ENCODE measurements at regions of chr3 and their contacts with region 1.

Region 1: GRCh38 chr3:132722164-132723024 is at the start of gene NPHP3:
- DNase-seq: peak; percentile 98
- H3K4me3 Mint-ChIP-seq: peak within 1 kb of the TSS; percentile 84
- H3K27ac Mint-ChIP-seq: peak within 1 kb of the TSS; percentile 77
- H3K4me1 Mint-ChIP-seq: peaks cover 39% of the 10 kb centered on the region
- H3K27me3 Mint-ChIP-seq: no peaks in the 10 kb centered on the region
- total RNA-seq, gene NPHP3: 13.6 to 16.7 TPM

Region 2: DNA sequence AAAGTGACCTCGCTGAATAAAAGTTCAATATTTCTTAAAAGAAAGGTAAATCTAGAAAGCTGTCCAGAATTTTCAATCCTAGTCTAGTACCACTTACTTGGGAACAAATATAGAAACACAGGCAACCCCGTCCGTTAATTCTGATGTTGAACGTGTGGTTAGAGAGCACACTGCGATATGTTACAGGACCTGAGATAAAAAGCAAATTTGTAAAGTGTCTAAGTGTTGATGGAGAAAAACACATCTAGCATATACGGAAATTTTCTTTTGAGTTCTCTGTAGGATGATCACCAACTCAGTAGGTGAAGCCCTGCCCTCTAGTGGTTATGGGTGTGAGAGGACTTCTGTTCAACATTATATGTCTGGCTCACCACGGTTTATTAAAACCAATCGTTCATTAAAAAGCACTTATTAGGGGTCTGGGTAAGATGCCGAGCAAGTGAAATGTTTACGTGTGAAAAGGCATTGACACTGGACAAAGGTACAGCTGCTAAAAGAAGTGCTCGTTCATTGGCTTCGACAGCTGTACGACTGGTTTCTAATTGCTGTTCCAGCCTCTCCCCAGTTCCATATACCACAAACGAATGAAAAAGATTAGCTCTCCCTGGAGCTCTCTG is 1829.5 kb before region 1 on chr3:
- CTCF ChIA-PET with region 1: no interaction called
- POLR2A ChIA-PET with region 1: no interaction called
- intact Hi-C with region 1: loop called (anchors 5 kb)
- DNase-seq: peak; percentile 69
- H3K4me3 Mint-ChIP-seq: peak overlapping the region; percentile 95
- H3K27ac Mint-ChIP-seq: peak overlapping the region; percentile 99
- H3K4me1 Mint-ChIP-seq: peaks cover 36% of the 10 kb centered on the region
- H3K27me3 Mint-ChIP-seq: no peaks in the 10 kb centered on the region

Region 3: DNA sequence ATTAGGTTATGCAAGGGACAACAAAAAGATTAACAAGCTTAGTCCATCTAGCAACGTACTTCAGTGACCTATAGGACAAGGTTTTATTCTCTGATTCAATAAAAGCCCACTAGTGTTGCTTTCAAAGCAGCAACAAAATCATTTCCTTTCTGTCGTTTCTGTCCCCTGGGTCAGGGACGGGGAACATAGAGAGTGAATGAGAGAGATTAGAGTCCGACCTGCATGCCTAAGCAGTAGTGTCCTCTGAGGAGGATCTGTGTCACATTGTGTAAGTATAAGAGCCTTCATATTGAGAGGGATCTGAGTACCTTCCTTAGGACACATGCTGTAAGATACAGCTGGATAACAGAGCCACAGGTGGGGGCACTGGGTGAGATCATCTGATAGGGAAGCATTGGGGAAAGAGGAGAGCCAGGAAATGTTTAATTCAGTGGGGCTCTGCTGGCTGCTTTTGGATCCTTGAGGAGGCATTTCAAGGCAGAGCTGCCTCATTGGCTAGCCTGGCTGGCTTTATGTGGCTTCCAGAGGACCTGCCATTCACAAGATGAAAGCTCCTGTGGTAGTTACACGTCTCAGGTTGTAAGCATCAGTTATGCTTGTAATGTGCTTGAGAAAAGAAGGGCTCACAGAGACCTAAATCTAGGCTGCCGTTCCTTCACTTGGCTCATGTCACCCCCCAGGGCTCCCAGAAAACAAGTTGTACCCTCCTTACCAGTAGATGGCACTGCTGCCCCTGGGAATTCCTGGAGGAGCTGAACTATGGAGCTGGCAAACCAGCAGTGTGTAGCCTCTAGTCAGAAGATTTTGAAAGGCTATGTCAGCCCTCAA is 318.5 kb after region 1 on chr3:
- CTCF ChIA-PET with region 1: interaction called, 5 read pairs
- POLR2A ChIA-PET with region 1: no interaction called
- intact Hi-C with region 1: loop called (anchors 5 kb)
- DNase-seq: peak; percentile 58
- H3K4me3 Mint-ChIP-seq: no peak overlapping the region
- H3K27ac Mint-ChIP-seq: no peak overlapping the region
- H3K4me1 Mint-ChIP-seq: peaks cover 5% of the 10 kb centered on the region
- H3K27me3 Mint-ChIP-seq: peaks cover 37% of the 10 kb centered on the region

Region 4: GRCh38 chr3:133426721-133427120 is 704.3 kb after region 1 on chr3:
- CTCF ChIA-PET with region 1: interaction called, 77 read pairs
- POLR2A ChIA-PET with region 1: interaction called, 3 read pairs
- intact Hi-C with region 1: loop called (anchors 1 kb)
- DNase-seq: peak; percentile 24
- H3K4me3 Mint-ChIP-seq: no peak overlapping the region
- H3K27ac Mint-ChIP-seq: no peak overlapping the region
- H3K4me1 Mint-ChIP-seq: peaks cover 6% of the 10 kb centered on the region
- H3K27me3 Mint-ChIP-seq: no peaks in the 10 kb centered on the region

Region 5: DNA sequence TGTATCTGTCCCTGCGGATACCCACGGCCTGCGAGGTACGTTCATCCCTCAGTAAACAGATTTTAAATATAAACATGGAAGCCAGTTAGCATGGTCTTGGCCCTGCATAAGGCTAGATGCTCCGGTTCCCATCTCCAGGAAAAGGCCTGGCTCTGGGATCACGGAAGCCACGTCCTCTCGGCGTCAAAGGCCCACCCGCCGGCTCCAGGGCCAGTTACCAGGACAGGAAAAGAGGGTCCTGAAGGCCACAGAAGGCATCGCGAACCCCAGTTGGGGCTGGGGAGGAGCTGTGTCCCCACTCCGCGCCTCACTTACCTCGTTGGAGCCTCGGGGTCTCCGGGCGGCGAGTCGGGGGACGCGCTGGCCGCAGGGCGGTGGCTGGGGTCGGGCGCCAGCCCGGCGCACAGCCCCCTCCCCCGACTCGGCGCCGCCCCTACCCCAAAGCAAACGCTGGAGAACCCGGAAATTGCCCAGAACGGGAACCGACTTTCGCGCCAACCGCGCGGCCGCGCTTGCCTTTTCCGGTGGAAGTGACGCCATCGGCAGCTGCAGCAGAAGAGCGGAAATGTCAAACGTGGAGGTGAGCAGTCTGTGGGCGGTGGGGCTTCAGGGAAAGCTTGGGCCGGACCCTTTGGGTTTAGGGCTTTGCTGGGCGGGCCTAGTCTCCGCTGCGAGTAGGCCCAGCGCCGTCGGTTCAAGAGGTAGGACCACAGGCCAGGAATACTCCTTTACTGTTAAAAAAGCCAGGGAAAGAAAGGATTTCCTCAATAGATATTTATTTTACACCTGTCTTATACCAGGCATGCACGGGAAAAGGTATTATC is 939.3 kb after region 1 on chr3 and contains the start of gene TOPBP1:
- CTCF ChIA-PET with region 1: interaction called, 4 read pairs
- POLR2A ChIA-PET with region 1: no interaction called
- intact Hi-C with region 1: loop called (anchors 2 kb)
- DNase-seq: peak; percentile 94
- H3K4me3 Mint-ChIP-seq: peak within 1 kb of the TSS; percentile 98
- H3K27ac Mint-ChIP-seq: peak within 1 kb of the TSS; percentile 98
- H3K4me1 Mint-ChIP-seq: peaks cover 32% of the 10 kb centered on the region
- H3K27me3 Mint-ChIP-seq: no peaks in the 10 kb centered on the region
- total RNA-seq, gene TOPBP1: 73.9 to 79.1 TPM

Region 6: DNA sequence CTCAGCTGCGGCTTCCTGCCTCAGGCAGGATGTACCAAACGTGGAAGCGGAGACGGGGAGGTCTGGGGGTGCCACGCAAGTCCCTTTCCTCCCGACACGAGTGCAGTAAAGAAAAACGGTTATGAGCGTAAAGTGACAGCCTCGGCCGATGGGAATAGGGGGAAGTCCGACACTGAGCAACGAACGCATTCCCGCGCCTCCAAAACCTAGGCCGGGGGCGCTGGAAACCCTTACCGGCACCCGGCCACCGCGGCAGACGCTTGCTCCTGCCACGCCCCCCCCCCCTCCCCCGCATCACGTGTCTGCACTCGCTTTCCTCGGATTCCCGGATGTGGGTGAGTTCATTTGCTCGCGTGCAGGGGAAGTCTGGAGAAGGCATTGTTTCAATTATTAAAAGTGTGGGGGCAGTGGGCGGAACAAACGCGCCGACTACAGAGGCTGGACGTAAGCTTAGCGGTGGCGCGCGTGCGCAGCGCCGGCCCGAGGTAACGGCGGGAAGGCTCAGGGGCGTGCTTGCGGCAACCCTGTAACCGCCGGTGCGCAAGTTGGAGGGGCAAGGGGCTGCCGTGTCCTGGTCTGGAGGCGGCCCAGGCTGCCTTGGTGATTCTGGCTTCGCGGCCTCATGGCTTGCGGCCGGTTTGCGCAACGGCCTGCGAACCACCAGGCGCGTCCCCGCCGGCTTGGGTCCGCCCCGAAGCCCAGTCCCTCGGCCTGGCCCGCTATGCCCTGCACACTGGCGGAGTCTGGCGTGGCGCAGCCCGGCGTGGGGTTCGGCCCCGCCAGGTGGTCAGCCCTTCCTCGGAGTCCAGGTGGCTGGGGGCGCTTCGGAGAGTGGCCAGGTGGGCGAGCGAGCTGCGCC is 1763.6 kb after region 1 on chr3 and contains the starts of genes ANAPC13 and CEP63:
- CTCF ChIA-PET with region 1: no interaction called
- POLR2A ChIA-PET with region 1: no interaction called
- intact Hi-C with region 1: loop called (anchors 5 kb)
- DNase-seq: peak; percentile 95
- H3K4me3 Mint-ChIP-seq: peak within 1 kb of the TSS; percentile 87
- H3K27ac Mint-ChIP-seq: peak within 1 kb of the TSS; percentile 97
- H3K4me1 Mint-ChIP-seq: peaks cover 46% of the 10 kb centered on the region
- H3K27me3 Mint-ChIP-seq: no peaks in the 10 kb centered on the region
- total RNA-seq, gene ANAPC13: 30.1 to 33.1 TPM
- total RNA-seq, gene CEP63: 22.4 to 23.7 TPM